ENCODE measurements at regions of chr2 and their contacts with region 1.

Region 1: GRCh38 chr2:219278655-219279516 is at the start of gene DNAJB2:
- DNase-seq: peak; percentile 99
- ATAC-seq: peak; percentile 95 to 97 (median 97)
- H3K4me3 ChIP-seq: peak within 1 kb of the TSS; percentile 56 to 96 (median 75)
- H3K27ac ChIP-seq: peak within 1 kb of the TSS; percentile 91 to 100 (median 98)
- H3K4me1 ChIP-seq: peaks cover 11 to 62% (median 36%) of the 10 kb centered on the region in 9 donors
- H3K27me3 ChIP-seq: no peaks in the 10 kb centered on the region
- CTCF ChIP-seq: no peak
- total RNA-seq, gene DNAJB2: 55.6 to 87.6 (median 83.1) TPM

Region 2: DNA sequence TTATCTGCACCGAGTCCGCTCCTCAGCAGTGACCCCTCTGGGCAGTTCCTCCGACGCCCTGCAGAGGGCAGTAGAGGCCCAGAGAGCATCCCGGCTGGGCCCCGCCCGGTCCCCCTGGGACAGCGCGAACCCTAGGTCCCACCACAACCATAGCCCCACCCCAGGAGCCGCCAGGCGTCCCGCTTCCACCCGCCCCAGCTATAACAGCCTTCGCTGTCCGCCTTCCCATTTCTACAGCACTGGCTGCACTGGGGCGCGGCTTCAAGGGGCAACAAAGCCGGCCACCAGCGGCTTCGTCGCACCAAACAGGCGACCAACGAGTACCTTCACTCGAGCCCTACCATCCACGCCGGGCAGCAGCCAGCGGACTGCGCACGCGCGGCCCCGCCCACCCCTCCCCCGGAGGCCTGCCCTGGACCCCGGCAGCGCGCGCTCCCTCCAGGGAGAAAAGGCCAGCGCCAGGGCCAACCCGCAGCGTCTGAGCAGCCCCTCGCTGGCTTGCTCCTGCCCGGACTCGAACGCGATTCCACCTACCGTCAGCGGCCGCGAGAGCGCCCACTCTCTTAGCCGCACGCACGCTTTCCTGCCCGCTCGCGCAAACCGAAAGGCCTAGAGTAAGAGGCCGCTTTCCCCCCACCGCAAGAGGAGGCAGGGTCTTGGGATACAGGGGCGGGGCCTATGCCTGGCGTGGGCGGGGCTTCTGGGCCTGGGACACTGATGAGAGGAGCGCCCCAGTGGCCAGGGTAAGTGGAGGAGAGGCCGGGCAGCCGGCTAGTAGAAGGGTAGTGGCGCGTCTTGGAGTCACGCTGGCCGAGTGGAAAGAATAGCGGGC is 118.5 kb before region 1 on chr2 and contains the start of gene NHEJ1:
- intact Hi-C with region 1: loop called in 1 of 10 experiments (anchors 5 kb)
- DNase-seq: peak; percentile 97 to 98
- ATAC-seq: peak; percentile 96 to 98 (median 97)
- H3K4me3 ChIP-seq: peak within 1 kb of the TSS; percentile 40 to 74 (median 62)
- H3K27ac ChIP-seq: peak within 1 kb of the TSS; percentile 80 to 94 (median 92)
- H3K4me1 ChIP-seq: peaks cover 0 to 19% (median 11%) of the 10 kb centered on the region in 9 donors
- H3K27me3 ChIP-seq: no peaks in the 10 kb centered on the region
- CTCF ChIP-seq: peak; percentile 99 to 100 (median 99)
- total RNA-seq, gene NHEJ1: 4.7 to 12.0 (median 7.1) TPM

Region 3: GRCh38 chr2:219186754-219187456 is 92.0 kb before region 1 on chr2:
- intact Hi-C with region 1: no loop called
- DNase-seq: no peak
- ATAC-seq: no peak
- H3K4me3 ChIP-seq: no peak overlapping the region
- H3K27ac ChIP-seq: no peak overlapping the region
- H3K4me1 ChIP-seq: peaks cover 0 to 11% (median 0%) of the 10 kb centered on the region in 9 donors
- H3K27me3 ChIP-seq: no peaks in the 10 kb centered on the region
- CTCF ChIP-seq: no peak

Region 4: GRCh38 chr2:219206442-219207253 is 72.2 kb before region 1 on chr2 and contains the start of gene ZFAND2B:
- intact Hi-C with region 1: loop called in 1 of 10 experiments (anchors 2 kb)
- DNase-seq: peak; percentile 94 to 96
- ATAC-seq: peak; percentile 97 to 99 (median 98)
- H3K4me3 ChIP-seq: peak within 1 kb of the TSS; percentile 33 to 82 (median 70)
- H3K27ac ChIP-seq: peak within 1 kb of the TSS; percentile 80 to 99 (median 95)
- H3K4me1 ChIP-seq: peaks cover 8 to 31% (median 20%) of the 10 kb centered on the region in 9 donors
- H3K27me3 ChIP-seq: no peaks in the 10 kb centered on the region
- CTCF ChIP-seq: peak in 1 of 9 donors; percentile 7
- total RNA-seq, gene ZFAND2B: 11.5 to 19.2 (median 16.4) TPM

Region 5: GRCh38 chr2:219218732-219219701 is 59.9 kb before region 1 on chr2 and contains the start of gene ABCB6:
- intact Hi-C with region 1: loop called in 1 of 10 experiments (anchors 2 kb)
- DNase-seq: peak; percentile 97 to 98
- ATAC-seq: peak; percentile 90 to 93 (median 92)
- H3K4me3 ChIP-seq: peak within 1 kb of the TSS; percentile 30 to 75 (median 64)
- H3K27ac ChIP-seq: peak within 1 kb of the TSS; percentile 72 to 95 (median 90)
- H3K4me1 ChIP-seq: peaks cover 12 to 40% (median 34%) of the 10 kb centered on the region in 9 donors
- H3K27me3 ChIP-seq: no peaks in the 10 kb centered on the region
- CTCF ChIP-seq: no peak
- total RNA-seq, gene ABCB6: 9.8 to 31.0 (median 14.8) TPM

Region 6: DNA sequence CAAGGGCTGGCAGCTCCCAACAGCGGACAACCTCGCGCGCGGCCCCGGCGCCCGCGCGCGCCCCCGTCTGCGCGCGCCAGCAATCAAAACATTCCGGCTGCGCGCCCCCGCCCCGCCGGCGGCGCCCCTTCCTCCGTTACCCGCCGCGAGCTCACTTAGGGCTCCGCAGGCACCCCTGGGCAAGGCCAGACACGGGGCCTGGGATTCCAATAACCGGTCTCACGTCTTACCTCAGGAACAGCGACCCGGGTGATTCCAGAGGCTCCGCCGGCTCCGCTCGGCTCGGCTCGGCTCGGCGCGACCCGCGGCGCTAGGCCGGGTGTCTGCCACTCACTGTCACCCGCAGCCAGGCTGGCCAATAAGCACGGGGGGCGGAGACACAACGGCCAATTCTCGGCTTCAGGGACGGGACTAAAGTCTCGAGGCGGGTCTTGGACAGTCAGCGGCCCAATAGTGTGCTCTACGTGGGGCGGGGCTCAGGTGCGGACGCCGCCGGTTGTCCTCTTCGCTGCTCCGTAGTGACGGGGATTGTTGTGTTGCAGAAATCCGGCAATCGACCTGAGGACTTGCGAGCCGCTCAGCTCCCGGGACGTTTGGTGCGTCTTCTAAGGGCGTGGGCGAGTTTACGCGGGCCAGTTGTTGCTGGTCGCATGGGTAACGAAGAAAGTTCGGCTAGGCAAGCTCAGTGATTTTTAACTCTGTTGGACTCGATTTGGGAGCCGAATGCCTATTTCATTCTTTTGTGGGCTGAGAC is 49.4 kb before region 1 on chr2 and contains the starts of genes ANKZF1 and ATG9A:
- intact Hi-C with region 1: loop called in 2 of 10 experiments (anchors 1 to 2 kb)
- DNase-seq: peak; percentile 98 to 99
- ATAC-seq: peak; percentile 98 to 99 (median 99)
- H3K4me3 ChIP-seq: peak within 1 kb of the TSS; percentile 73 to 91 (median 82)
- H3K27ac ChIP-seq: peak within 1 kb of the TSS; percentile 89 to 99 (median 96)
- H3K4me1 ChIP-seq: peaks cover 15 to 49% (median 32%) of the 10 kb centered on the region in 9 donors
- H3K27me3 ChIP-seq: no peaks in the 10 kb centered on the region
- CTCF ChIP-seq: no peak
- total RNA-seq, gene ANKZF1: 16.4 to 36.8 (median 25.5) TPM
- total RNA-seq, gene ATG9A: 64.5 to 103 (median 76.4) TPM

Region 7: GRCh38 chr2:219253753-219254590 is 24.9 kb before region 1 on chr2 and contains the start of gene TUBA4A:
- intact Hi-C with region 1: loop called in 2 of 10 experiments (anchors 2 kb)
- DNase-seq: peak; percentile 83 to 86
- ATAC-seq: peak; percentile 90 to 95 (median 94)
- H3K4me3 ChIP-seq: peak within 1 kb of the TSS; percentile 54 to 95 (median 76)
- H3K27ac ChIP-seq: peak within 1 kb of the TSS in 9 of 10 donors; percentile 6 to 99 (median 84)
- H3K4me1 ChIP-seq: peaks cover 25 to 58% (median 48%) of the 10 kb centered on the region in 9 donors
- H3K27me3 ChIP-seq: peaks cover 0 to 35% (median 5%) of the 10 kb centered on the region in 7 donors
- CTCF ChIP-seq: peak in 2 of 9 donors; percentile 12 to 25
- total RNA-seq, gene TUBA4A: 76.0 to 245 (median 145) TPM

Region 8: DNA sequence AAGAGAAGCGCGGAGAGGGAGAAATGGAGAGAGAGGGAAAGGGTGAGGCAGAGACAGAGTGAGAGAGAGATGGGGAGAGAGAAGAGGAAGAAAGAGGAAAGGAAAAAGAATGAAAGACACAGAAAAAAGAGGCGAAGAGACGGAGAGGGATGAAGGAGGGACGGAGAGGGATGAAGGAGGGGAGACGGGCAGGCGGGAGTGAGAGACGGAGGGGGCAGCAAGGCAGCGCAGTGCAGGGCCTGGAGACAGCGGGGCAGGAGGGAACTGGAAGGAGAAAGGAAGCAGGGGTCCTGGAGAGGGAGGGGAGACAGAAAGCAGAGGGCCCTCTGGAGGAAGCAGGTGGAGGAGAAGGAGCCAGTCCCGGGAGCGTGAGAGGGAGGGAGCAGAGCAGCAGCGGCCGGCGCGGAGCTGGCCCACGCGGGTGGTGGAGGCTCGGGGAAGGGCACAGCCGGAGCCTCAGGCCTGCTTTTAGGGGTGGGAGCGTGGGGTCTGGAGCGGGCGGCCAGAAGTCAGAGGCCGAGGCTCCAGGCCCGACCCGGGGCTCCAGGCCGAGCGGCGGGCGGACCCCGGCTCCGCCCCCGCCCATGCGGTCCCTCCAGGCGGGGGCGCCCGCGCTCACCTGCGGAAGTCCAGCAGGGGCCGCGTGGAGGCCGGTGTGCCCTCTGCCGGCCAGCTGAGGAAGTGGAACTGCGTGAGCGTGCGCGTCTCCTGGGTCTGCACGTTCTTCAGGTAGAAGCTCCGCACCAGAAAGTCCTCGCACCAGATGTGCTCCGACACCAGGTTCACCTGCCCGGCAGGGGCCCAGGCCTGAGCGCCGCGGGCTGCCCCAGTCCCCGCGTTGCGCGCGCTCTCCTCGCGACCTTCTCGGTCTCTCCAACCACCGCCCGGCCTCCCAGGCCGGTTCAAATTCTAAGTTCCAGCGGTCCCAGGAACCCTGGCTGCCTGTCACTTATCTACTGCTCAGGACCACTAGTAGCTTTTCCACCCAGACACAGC is 15.8 kb after region 1 on chr2:
- intact Hi-C with region 1: loop called in 6 of 10 experiments (anchors 1 to 2 kb)
- DNase-seq: peak; percentile 81 to 90
- ATAC-seq: peak; percentile 86 to 92 (median 89)
- H3K4me3 ChIP-seq: peak overlapping the region; percentile 43 to 67 (median 62)
- H3K27ac ChIP-seq: peak overlapping the region; percentile 8 to 90 (median 82)
- H3K4me1 ChIP-seq: peaks cover 3 to 24% (median 12%) of the 10 kb centered on the region in 9 donors
- H3K27me3 ChIP-seq: peaks cover 0 to 13% (median 8%) of the 10 kb centered on the region in 7 donors
- CTCF ChIP-seq: peak; percentile 99 to 100 (median 99)

Region 9: DNA sequence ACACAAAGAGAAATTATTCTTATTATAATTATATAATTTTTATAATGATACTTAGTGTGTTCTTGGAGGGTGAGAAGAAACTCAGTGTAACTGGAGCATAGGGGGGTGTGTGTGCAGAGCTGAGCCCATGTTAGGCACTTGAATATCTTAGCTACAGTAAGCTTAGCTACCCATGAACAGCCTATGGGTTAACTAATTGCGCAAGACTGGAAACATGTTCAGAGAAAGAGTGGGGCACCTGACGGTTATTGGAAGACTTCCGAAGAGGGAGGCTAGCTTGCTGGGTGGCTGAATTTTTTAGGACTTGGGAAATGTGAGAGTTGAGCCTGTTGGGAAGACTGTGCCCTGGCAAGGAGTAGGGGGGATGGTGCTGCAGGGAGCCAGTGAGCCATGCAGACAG is 577.7 kb after region 1 on chr2:
- intact Hi-C with region 1: no loop called
- DNase-seq: no peak
- ATAC-seq: no peak
- H3K4me3 ChIP-seq: no peak overlapping the region
- H3K27ac ChIP-seq: no peak overlapping the region
- H3K4me1 ChIP-seq: peaks cover 0 to 7% (median 0%) of the 10 kb centered on the region in 9 donors
- H3K27me3 ChIP-seq: peaks cover 0 to 12% (median 0%) of the 10 kb centered on the region in 7 donors
- CTCF ChIP-seq: no peak

Measured in heart right ventricle (tissue), 16 donors.